ENCODE measurements at regions of chr1 and their contacts with region 1.

Region 1: GRCh38 chr1:235270625-235271024 is 57.4 kb downstream of the ARID4B start:
- DNase-seq: no peak
- H3K4me3 Mint-ChIP-seq: no peak overlapping the region
- H3K27ac Mint-ChIP-seq: peak overlapping the region; percentile 75
- H3K4me1 Mint-ChIP-seq: peaks cover 65% of the 10 kb centered on the region
- H3K27me3 Mint-ChIP-seq: no peaks in the 10 kb centered on the region

Region 2: GRCh38 chr1:235206533-235207208 is 64.0 kb before region 1 on chr1:
- CTCF ChIA-PET with region 1: no interaction called
- intact Hi-C with region 1: loop called (anchors 5 kb)
- DNase-seq: peak; percentile 35
- H3K4me3 Mint-ChIP-seq: peak overlapping the region; percentile 19
- H3K27ac Mint-ChIP-seq: peak overlapping the region; percentile 83
- H3K4me1 Mint-ChIP-seq: peaks cover 28% of the 10 kb centered on the region
- H3K27me3 Mint-ChIP-seq: no peaks in the 10 kb centered on the region